Calu3 (cell line): ENCODE measurements at regions of chr5 and their contacts with region 1.

Region 1: GRCh38 chr5:82656341-82656761 is 378.2 kb upstream of the RPS23 start:
- DNase-seq: no peak
- H3K4me3 Mint-ChIP-seq: no peak overlapping the region
- H3K27ac Mint-ChIP-seq: no peak overlapping the region
- H3K4me1 Mint-ChIP-seq: no peaks in the 10 kb centered on the region
- H3K27me3 Mint-ChIP-seq: no peaks in the 10 kb centered on the region
- CTCF ChIP-seq: no peak

Region 2: DNA sequence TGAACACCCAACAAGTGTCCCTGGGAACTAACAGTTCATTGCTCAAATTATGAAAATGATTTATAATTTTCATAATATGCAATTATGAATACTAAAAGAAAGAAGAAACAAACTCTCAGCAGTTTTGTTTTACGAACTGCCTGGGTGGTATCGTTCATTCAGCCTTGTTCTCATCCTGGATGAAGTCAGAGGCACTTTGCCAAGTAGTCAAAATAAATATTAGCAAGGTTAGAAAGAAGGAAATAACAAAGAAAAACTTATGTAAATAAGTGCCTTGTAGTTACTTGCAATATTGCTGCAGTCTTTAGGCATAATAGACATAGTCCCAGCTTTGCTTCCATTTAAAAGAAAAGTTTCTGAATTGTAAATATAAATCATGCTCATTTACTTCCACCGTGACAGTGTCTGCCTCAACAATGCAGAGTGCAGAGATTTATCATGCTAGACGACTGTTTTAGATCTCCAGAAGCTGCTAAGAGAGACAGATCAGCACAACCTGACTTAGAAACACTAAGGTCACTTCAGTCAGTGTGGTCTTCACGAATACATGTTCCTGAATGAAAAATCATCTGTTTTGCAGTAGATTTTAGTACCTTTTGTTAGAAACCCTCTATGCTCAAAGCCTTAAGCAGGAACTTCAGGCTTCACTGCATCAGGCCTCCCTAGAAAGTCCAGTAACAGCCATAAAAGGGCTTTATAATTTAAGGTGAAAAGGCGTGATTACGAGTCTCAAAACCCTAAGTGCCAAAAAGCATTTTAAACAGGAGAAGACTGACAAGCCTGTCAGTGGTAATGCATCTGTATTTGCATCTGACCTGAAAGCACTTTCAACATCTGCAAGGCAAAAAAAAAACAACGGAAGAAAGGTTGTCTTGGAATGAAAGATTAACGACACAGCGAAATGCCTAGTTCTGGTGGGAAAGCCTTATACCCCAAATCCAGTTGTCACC is 328.7 kb after region 1 on chr5:
- CTCF ChIA-PET with region 1: no interaction called
- intact Hi-C with region 1: loop called (anchors 10 kb)
- DNase-seq: no peak
- H3K4me3 Mint-ChIP-seq: no peak overlapping the region
- H3K27ac Mint-ChIP-seq: no peak overlapping the region
- H3K4me1 Mint-ChIP-seq: peaks cover 15% of the 10 kb centered on the region
- H3K27me3 Mint-ChIP-seq: no peaks in the 10 kb centered on the region
- CTCF ChIP-seq: no peak